CD8-positive, alpha-beta memory T cell (primary cell): ENCODE measurements at regions of chr2 and their contacts with region 1.

Region 1: DNA sequence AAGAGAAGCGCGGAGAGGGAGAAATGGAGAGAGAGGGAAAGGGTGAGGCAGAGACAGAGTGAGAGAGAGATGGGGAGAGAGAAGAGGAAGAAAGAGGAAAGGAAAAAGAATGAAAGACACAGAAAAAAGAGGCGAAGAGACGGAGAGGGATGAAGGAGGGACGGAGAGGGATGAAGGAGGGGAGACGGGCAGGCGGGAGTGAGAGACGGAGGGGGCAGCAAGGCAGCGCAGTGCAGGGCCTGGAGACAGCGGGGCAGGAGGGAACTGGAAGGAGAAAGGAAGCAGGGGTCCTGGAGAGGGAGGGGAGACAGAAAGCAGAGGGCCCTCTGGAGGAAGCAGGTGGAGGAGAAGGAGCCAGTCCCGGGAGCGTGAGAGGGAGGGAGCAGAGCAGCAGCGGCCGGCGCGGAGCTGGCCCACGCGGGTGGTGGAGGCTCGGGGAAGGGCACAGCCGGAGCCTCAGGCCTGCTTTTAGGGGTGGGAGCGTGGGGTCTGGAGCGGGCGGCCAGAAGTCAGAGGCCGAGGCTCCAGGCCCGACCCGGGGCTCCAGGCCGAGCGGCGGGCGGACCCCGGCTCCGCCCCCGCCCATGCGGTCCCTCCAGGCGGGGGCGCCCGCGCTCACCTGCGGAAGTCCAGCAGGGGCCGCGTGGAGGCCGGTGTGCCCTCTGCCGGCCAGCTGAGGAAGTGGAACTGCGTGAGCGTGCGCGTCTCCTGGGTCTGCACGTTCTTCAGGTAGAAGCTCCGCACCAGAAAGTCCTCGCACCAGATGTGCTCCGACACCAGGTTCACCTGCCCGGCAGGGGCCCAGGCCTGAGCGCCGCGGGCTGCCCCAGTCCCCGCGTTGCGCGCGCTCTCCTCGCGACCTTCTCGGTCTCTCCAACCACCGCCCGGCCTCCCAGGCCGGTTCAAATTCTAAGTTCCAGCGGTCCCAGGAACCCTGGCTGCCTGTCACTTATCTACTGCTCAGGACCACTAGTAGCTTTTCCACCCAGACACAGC is 14.5 kb downstream of the PTPRN start:
- DNase-seq: peak; percentile 83 to 92 (median 88)
- H3K4me3 ChIP-seq: peak overlapping the region; percentile 51
- H3K4me3 Mint-ChIP-seq: peak overlapping the region; percentile 54 to 81 (median 75)
- H3K27ac ChIP-seq: peak overlapping the region; percentile 55
- H3K27ac Mint-ChIP-seq: peak overlapping the region in 7 of 8 donors; percentile 29 to 96 (median 86)
- H3K4me1 ChIP-seq: peaks cover 22% of the 10 kb centered on the region
- H3K4me1 Mint-ChIP-seq: peaks cover 10 to 21% (median 16%) of the 10 kb centered on the region in 3 donors
- H3K27me3 ChIP-seq: peaks cover 4% of the 10 kb centered on the region
- H3K27me3 Mint-ChIP-seq: peaks cover 5 to 6% of the 10 kb centered on the region in 2 donors

Region 2: GRCh38 chr2:219160186-219161017 is 134.3 kb before region 1 on chr2 and contains the start of gene NHEJ1:
- CTCF ChIA-PET with region 1: interaction called, 61 read pairs
- POLR2A ChIA-PET with region 1: no interaction called
- DNase-seq: peak; percentile 87 to 95 (median 93)
- H3K4me3 ChIP-seq: peak within 1 kb of the TSS; percentile 64
- H3K4me3 Mint-ChIP-seq: peak within 1 kb of the TSS; percentile 93 to 99 (median 95)
- H3K27ac ChIP-seq: peak within 1 kb of the TSS; percentile 74
- H3K27ac Mint-ChIP-seq: peak within 1 kb of the TSS; percentile 86 to 98 (median 95)
- H3K4me1 ChIP-seq: peaks cover 13% of the 10 kb centered on the region
- H3K4me1 Mint-ChIP-seq: peaks cover 16 to 17% (median 17%) of the 10 kb centered on the region in 3 donors
- H3K27me3 ChIP-seq: no peaks in the 10 kb centered on the region
- H3K27me3 Mint-ChIP-seq: peaks cover 0 to 2% of the 10 kb centered on the region in 2 donors
- total RNA-seq, gene NHEJ1: 22.4 to 24.5 TPM

Region 3: DNA sequence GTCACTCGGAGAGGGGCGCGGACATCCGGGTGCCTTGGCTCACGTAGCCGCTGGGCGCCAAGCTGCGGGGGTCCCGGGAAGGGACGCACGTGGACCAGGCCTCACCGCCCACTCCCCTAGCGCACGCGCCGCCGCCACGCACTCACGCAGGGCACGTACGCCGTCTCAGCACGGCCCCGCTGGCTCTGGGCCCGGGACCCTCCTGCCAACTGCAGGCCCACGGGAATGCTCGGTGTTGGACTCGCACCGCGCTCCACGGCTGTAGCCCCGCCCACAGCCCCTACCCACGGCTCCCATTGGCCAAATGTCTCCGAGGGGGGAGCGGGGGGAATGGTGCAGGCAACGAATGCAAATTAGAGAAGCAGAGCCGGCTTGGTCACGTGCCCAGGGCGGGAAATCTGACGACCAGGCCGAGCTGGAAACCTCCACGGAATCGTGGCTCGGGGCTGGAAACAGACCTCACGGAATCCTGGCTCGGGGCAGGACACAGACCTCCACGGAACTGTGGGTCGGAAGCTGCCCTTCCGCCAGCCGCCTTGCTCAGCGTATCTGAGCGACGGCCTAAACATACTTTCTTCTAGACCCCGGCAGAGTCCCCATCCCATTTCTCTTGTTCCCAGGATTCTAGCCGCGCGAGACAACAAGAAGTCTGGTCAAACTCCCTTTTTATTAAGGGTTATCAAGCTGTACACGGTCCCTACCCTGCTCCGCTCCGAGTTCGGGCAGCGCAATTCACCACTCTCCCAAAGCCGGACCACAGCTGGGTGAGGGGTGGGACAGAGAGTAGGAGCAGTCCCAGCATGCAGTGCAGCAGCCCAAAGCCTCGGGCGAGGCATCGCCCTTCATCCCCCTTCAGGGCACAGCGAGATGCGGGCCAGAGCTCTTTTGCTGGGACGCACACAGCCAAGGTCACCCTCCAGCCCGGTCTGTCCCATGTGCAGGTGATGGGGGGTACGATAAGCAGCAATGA is 75.6 kb before region 1 on chr2 and contains the start of gene ABCB6:
- CTCF ChIA-PET with region 1: interaction called, 68 read pairs
- POLR2A ChIA-PET with region 1: interaction called, 4 read pairs
- DNase-seq: peak; percentile 70 to 87 (median 83)
- H3K4me3 ChIP-seq: peak within 1 kb of the TSS; percentile 72
- H3K4me3 Mint-ChIP-seq: peak within 1 kb of the TSS; percentile 66 to 91 (median 83)
- H3K27ac ChIP-seq: peak within 1 kb of the TSS; percentile 68
- H3K27ac Mint-ChIP-seq: peak within 1 kb of the TSS; percentile 36 to 88 (median 79)
- H3K4me1 ChIP-seq: peaks cover 18% of the 10 kb centered on the region
- H3K4me1 Mint-ChIP-seq: peaks cover 18 to 26% (median 18%) of the 10 kb centered on the region in 3 donors
- H3K27me3 ChIP-seq: no peaks in the 10 kb centered on the region
- H3K27me3 Mint-ChIP-seq: peaks cover 0 to 2% of the 10 kb centered on the region in 2 donors
- total RNA-seq, gene ABCB6: 22.1 to 22.8 TPM

Region 4: GRCh38 chr2:219253753-219254590 is 40.7 kb before region 1 on chr2 and contains the start of gene TUBA4A:
- CTCF ChIA-PET with region 1: interaction called, 132 read pairs
- POLR2A ChIA-PET with region 1: interaction called, 13 read pairs
- DNase-seq: peak; percentile 88 to 95 (median 90)
- H3K4me3 ChIP-seq: peak within 1 kb of the TSS; percentile 99
- H3K4me3 Mint-ChIP-seq: peak within 1 kb of the TSS; percentile 84 to 99 (median 89)
- H3K27ac ChIP-seq: peak within 1 kb of the TSS; percentile 95
- H3K27ac Mint-ChIP-seq: peak within 1 kb of the TSS; percentile 91 to 100 (median 96)
- H3K4me1 ChIP-seq: peaks cover 37% of the 10 kb centered on the region
- H3K4me1 Mint-ChIP-seq: peaks cover 45 to 50% (median 45%) of the 10 kb centered on the region in 3 donors
- H3K27me3 ChIP-seq: no peaks in the 10 kb centered on the region
- H3K27me3 Mint-ChIP-seq: no peaks in the 10 kb centered on the region
- total RNA-seq, gene TUBA4A: 175 to 178 TPM

Region 5: GRCh38 chr2:219308142-219309093 is 13.8 kb after region 1 on chr2:
- CTCF ChIA-PET with region 1: interaction called, 14 read pairs
- POLR2A ChIA-PET with region 1: no interaction called
- DNase-seq: peak; percentile 38 to 78 (median 58)
- H3K4me3 ChIP-seq: no peak overlapping the region
- H3K4me3 Mint-ChIP-seq: peak overlapping the region in 1 of 7 donors; percentile 34
- H3K27ac ChIP-seq: no peak overlapping the region
- H3K27ac Mint-ChIP-seq: peak overlapping the region in 1 of 8 donors; percentile 37
- H3K4me1 ChIP-seq: no peaks in the 10 kb centered on the region
- H3K4me1 Mint-ChIP-seq: peaks cover 0 to 5% (median 0%) of the 10 kb centered on the region in 3 donors
- H3K27me3 ChIP-seq: peaks cover 28% of the 10 kb centered on the region
- H3K27me3 Mint-ChIP-seq: peaks cover 39 to 70% of the 10 kb centered on the region in 2 donors